ENCODE measurements at regions of chr7 and their contacts with region 1.

Region 1: GRCh38 chr7:55018361-55019190 is at the start of gene EGFR:
- DNase-seq: no peak
- H3K4me3 ChIP-seq: peak within 1 kb of the TSS; percentile 75
- CTCF ChIP-seq: no peak

Region 2: DNA sequence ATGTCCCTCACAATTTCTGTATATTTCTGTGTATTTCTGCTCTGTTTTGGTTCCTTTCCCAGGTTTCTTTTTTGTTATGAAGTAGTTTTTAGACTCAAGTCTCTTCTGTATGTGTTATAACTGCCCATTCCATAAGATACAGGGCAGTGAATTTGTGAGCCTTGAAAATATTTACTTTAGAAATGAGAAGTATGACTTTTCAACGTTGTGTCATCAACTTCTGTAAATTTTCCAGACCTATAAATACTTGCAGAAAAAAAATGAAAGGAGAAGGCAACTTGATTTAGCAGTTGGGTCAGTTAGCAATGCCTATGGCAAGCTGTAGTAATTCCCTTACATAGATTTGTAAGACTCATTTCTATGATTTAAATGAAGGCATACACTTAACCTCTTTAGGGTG is 11.7 kb after region 1 on chr7:
- CTCF ChIA-PET with region 1: interaction called, 11 read pairs
- POLR2A ChIA-PET with region 1: no interaction called
- DNase-seq: no peak
- H3K4me3 ChIP-seq: no peak overlapping the region
- CTCF ChIP-seq: no peak